Naive thymus-derived CD4-positive, alpha-beta T cell (primary cell): ENCODE measurements at regions of chr7 and their contacts with region 1.

Region 1: GRCh38 chr7:139602143-139602722 is 78.7 kb downstream of the CLEC2L start:
- DNase-seq: peak in 6 of 9 donors; percentile 16 to 46 (median 44)
- ATAC-seq: peak; percentile 73
- H3K4me3 ChIP-seq: no peak overlapping the region
- H3K4me3 Mint-ChIP-seq: no peak overlapping the region
- H3K27ac ChIP-seq: no peak overlapping the region
- H3K27ac Mint-ChIP-seq: no peak overlapping the region
- H3K4me1 ChIP-seq: no peaks in the 10 kb centered on the region
- H3K4me1 Mint-ChIP-seq: peaks cover 0 to 3% (median 0%) of the 10 kb centered on the region in 7 donors
- H3K27me3 ChIP-seq: no peaks in the 10 kb centered on the region
- H3K27me3 Mint-ChIP-seq: no peaks in the 10 kb centered on the region

Region 2: DNA sequence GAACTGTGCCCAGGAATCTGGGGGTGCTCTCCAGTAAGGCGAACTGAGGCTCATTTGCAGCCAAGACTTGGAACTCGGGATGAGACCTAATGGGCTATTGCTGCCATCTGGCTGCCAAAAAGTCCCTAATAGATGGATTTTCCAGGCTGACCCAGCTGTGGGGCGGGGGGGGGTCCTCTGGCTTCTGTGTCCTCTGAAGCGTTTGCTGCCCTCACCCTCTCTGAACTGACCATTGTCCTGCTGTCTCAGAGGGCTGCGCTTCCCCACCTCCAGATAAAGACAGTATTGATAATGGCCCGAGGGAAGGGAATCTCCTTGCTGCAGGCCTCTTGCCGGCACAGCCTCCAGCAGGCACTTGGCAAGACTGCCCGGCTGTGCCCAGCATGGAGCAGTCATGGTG is 32.1 kb before region 1 on chr7:
- CTCF ChIA-PET with region 1: no interaction called
- POLR2A ChIA-PET with region 1: no interaction called
- intact Hi-C with region 1: no loop called
- DNase-seq: no peak
- ATAC-seq: no peak
- H3K4me3 ChIP-seq: no peak overlapping the region
- H3K4me3 Mint-ChIP-seq: no peak overlapping the region
- H3K27ac ChIP-seq: no peak overlapping the region
- H3K27ac Mint-ChIP-seq: peak overlapping the region in 1 of 9 donors; percentile 32
- H3K4me1 ChIP-seq: peaks cover 0 to 5% of the 10 kb centered on the region in 2 donors
- H3K4me1 Mint-ChIP-seq: peaks cover 0 to 33% (median 28%) of the 10 kb centered on the region in 7 donors
- H3K27me3 ChIP-seq: no peaks in the 10 kb centered on the region
- H3K27me3 Mint-ChIP-seq: no peaks in the 10 kb centered on the region

Region 3: DNA sequence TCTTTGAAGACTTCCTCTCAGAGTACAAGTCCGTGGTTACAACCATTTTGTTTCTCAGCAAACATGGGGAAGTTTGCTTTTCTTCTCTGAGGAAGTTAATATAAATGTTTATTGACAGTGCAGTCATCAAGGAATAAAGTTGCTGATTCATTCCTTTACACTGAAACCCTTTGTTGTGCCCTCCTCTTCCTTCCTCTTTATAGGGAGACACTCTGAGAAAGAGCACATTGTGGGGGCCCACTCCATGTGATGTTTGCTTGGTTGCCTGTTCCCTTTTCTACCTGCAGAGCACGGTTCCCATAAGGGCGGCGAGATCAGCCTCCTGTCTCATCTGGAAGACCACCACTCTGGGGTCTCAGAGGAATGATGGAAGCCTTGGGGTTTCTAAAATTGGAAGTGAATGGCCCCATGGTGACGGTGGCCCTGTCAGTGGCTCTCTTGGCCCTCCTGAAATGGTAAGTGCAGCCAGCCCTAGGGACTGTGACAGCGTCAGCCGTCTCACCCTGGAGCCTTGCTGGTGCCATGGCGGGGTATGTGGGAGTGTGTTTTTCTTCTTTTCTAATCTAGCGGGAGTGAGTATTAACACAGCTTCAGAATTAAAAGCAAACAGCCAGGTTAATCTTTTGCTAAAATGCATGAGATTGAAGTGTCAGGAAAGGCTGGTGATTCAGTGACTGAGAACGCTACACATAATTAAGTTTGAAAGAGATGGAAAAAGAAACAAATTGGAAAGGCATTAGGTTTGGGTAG is 227.0 kb after region 1 on chr7 and contains the start of gene TBXAS1:
- CTCF ChIA-PET with region 1: interaction called, 3 read pairs
- POLR2A ChIA-PET with region 1: no interaction called
- intact Hi-C with region 1: loop called in 1 of 2 experiments (anchors 1 kb)
- DNase-seq: peak in 3 of 9 donors; percentile 6 to 14 (median 12)
- ATAC-seq: peak; percentile 87
- H3K4me3 ChIP-seq: no peak within 1 kb of the TSS
- H3K4me3 Mint-ChIP-seq: peak within 1 kb of the TSS; percentile 19 to 78 (median 68)
- H3K27ac ChIP-seq: no peak within 1 kb of the TSS
- H3K27ac Mint-ChIP-seq: peak within 1 kb of the TSS in 8 of 9 donors; percentile 67 to 90 (median 83)
- H3K4me1 ChIP-seq: peaks cover 0 to 8% of the 10 kb centered on the region in 2 donors
- H3K4me1 Mint-ChIP-seq: peaks cover 10 to 30% (median 26%) of the 10 kb centered on the region in 7 donors
- H3K27me3 ChIP-seq: no peaks in the 10 kb centered on the region
- H3K27me3 Mint-ChIP-seq: peaks cover 0 to 16% (median 5%) of the 10 kb centered on the region in 5 donors
- total RNA-seq, gene TBXAS1: 2.6 to 70.9 (median 6.7) TPM

Region 4: GRCh38 chr7:140249036-140249806 is 647.0 kb after region 1 on chr7:
- CTCF ChIA-PET with region 1: no interaction called
- POLR2A ChIA-PET with region 1: no interaction called
- intact Hi-C with region 1: no loop called
- DNase-seq: no peak
- ATAC-seq: no peak
- H3K4me3 ChIP-seq: no peak overlapping the region
- H3K4me3 Mint-ChIP-seq: no peak overlapping the region
- H3K27ac ChIP-seq: no peak overlapping the region
- H3K27ac Mint-ChIP-seq: no peak overlapping the region
- H3K4me1 ChIP-seq: peaks cover 0 to 21% of the 10 kb centered on the region in 2 donors
- H3K4me1 Mint-ChIP-seq: peaks cover 0 to 34% (median 5%) of the 10 kb centered on the region in 7 donors
- H3K27me3 ChIP-seq: no peaks in the 10 kb centered on the region
- H3K27me3 Mint-ChIP-seq: no peaks in the 10 kb centered on the region

Region 5: GRCh38 chr7:140326116-140326928 is 724.1 kb after region 1 on chr7:
- CTCF ChIA-PET with region 1: no interaction called
- POLR2A ChIA-PET with region 1: no interaction called
- intact Hi-C with region 1: loop called in 1 of 2 experiments (anchors 1 kb)
- DNase-seq: peak; percentile 16 to 61 (median 54)
- ATAC-seq: peak; percentile 88
- H3K4me3 ChIP-seq: no peak overlapping the region
- H3K4me3 Mint-ChIP-seq: no peak overlapping the region
- H3K27ac ChIP-seq: no peak overlapping the region
- H3K27ac Mint-ChIP-seq: peak overlapping the region in 1 of 9 donors; percentile 76
- H3K4me1 ChIP-seq: peaks cover 4 to 5% of the 10 kb centered on the region in 2 donors
- H3K4me1 Mint-ChIP-seq: peaks cover 0 to 3% (median 0%) of the 10 kb centered on the region in 7 donors
- H3K27me3 ChIP-seq: no peaks in the 10 kb centered on the region
- H3K27me3 Mint-ChIP-seq: no peaks in the 10 kb centered on the region